B cell (primary cell): ENCODE measurements at regions of chr2 and their contacts with region 1.

Region 1: GRCh38 chr2:201182650-201183364 is at the start of gene CASP10:
- DNase-seq: peak; percentile 85
- ATAC-seq: peak; percentile 84
- H3K4me3 ChIP-seq: peak within 1 kb of the TSS; percentile 64 to 96 (median 79)
- H3K4me3 Mint-ChIP-seq: peak within 1 kb of the TSS; percentile 96
- H3K27ac ChIP-seq: peak within 1 kb of the TSS; percentile 33 to 71
- H3K27ac Mint-ChIP-seq: peak within 1 kb of the TSS; percentile 86
- H3K4me1 ChIP-seq: peaks cover 30 to 37% of the 10 kb centered on the region in 2 donors
- H3K4me1 Mint-ChIP-seq: peaks cover 46% of the 10 kb centered on the region
- H3K27me3 ChIP-seq: no peaks in the 10 kb centered on the region
- H3K27me3 Mint-ChIP-seq: no peaks in the 10 kb centered on the region
- CTCF ChIP-seq: peak; percentile 71
- total RNA-seq, gene CASP10: 33.7 and 34.3 TPM in 2 replicates

Region 2: DNA sequence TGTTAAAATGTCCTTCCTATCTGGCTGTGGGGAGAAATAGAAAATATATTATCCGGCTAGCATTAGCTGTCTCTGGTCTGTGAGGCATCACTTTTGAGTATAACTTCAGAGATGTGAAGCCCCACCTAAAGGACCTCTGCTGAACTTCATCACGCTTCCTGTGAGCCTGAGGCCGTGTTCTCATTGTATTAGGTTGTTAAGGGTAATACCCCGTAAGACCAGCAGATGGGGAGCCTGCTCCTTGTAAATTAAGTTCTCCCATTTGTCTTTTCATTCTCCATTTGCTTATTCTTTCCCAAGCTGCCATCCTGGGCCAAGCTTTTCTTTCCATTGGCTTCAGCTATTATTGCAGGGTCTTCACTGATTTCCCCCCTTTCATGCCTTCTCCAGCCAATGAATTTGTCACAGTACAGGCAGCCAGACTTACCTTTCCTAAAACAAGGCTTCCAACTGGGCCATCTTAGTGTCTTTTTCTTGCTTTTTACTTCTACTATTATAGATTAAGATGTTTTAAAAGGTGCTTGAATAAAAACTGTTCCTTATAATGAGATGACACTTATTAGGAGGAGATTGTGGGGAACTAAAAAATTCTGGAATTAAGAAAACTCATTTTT is 281.2 kb before region 1 on chr2:
- CTCF ChIA-PET with region 1: interaction called, 53 read pairs
- POLR2A ChIA-PET with region 1: interaction called, 5 read pairs
- intact Hi-C with region 1: no loop called
- DNase-seq: peak; percentile 86
- ATAC-seq: peak; percentile 100
- H3K4me3 ChIP-seq: no peak overlapping the region
- H3K4me3 Mint-ChIP-seq: no peak overlapping the region
- H3K27ac ChIP-seq: peak overlapping the region in 1 of 2 donors; percentile 40
- H3K27ac Mint-ChIP-seq: no peak overlapping the region
- H3K4me1 ChIP-seq: no peaks in the 10 kb centered on the region
- H3K4me1 Mint-ChIP-seq: peaks cover 4% of the 10 kb centered on the region
- H3K27me3 ChIP-seq: no peaks in the 10 kb centered on the region
- H3K27me3 Mint-ChIP-seq: no peaks in the 10 kb centered on the region
- CTCF ChIP-seq: peak; percentile 94

Region 3: DNA sequence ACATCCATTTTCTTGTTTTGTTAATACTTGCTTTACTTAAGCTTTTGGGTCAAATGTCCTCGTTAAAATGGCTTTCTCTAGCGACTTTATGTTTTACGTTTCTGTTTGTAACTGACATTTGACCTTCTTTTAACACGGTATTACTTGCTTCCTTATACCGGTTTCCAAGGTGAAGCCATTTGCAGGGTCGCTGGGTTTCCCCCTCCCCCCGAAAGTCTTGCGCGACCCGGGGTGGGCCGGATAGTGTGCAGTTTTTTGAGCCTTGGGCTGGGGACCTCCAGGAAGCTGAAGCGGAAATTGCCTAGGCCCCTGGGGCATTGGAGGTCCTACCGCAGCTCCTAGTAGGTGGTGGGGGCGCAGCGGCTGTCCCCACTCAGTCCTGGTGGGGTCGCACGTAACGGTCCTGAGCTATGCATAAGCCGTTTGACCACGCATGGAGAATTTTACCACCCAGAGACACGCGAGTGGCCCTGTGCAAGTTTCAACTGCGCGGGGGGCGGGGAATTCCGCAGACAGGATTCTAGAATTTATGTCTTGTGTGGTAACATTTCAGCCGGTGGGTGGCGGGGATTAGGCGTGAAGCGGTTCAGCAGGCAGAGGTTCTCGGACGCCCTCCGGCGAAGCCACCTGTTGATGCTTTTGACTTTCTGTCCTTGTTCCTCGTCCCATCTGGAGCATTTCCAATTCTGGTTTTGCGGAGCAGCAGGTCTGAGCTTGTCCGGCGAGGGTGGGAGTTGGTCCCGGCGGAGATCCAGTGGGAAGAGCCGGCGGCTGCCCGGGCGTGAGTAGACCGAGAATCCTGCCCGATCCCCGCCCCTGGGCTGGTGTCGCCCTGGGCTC is 64.5 kb before region 1 on chr2:
- CTCF ChIA-PET with region 1: interaction called, 41 read pairs
- POLR2A ChIA-PET with region 1: interaction called, 12 read pairs
- intact Hi-C with region 1: no loop called
- DNase-seq: peak; percentile 95
- ATAC-seq: peak; percentile 64
- H3K4me3 ChIP-seq: peak overlapping the region; percentile 66 to 100 (median 97)
- H3K4me3 Mint-ChIP-seq: peak overlapping the region; percentile 98
- H3K27ac ChIP-seq: peak overlapping the region; percentile 94 to 96
- H3K27ac Mint-ChIP-seq: peak overlapping the region; percentile 98
- H3K4me1 ChIP-seq: peaks cover 63 to 72% of the 10 kb centered on the region in 2 donors
- H3K4me1 Mint-ChIP-seq: peaks cover 72% of the 10 kb centered on the region
- H3K27me3 ChIP-seq: no peaks in the 10 kb centered on the region
- H3K27me3 Mint-ChIP-seq: no peaks in the 10 kb centered on the region
- CTCF ChIP-seq: peak; percentile 55

Region 4: DNA sequence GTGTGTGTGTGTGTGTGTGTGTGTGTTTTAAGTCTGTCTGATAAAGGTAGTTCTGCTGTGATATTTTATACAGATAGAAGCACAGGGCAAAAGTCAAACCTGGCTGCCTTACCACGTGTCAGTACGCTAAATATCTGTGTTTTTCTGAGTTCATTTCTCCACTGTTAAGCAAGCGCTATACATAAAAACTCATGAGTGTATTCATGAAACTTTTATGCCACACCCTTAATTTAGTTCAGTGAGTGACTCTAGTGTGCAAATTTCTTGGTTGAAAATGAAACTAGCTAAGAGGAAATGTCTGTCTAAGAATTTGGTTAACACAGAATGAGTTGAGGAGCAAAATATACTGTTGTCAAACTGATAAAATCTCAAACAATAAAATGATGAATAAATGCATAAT is 11.3 kb after region 1 on chr2:
- CTCF ChIA-PET with region 1: interaction called, 23 read pairs
- POLR2A ChIA-PET with region 1: interaction called, 6 read pairs
- intact Hi-C with region 1: loop called (anchors 1 kb)
- DNase-seq: peak; percentile 76
- ATAC-seq: peak; percentile 96
- H3K4me3 ChIP-seq: peak overlapping the region in 1 of 5 experiments; percentile 29
- H3K4me3 Mint-ChIP-seq: peak overlapping the region; percentile 80
- H3K27ac ChIP-seq: peak overlapping the region; percentile 31 to 50
- H3K27ac Mint-ChIP-seq: peak overlapping the region; percentile 89
- H3K4me1 ChIP-seq: peaks cover 46 to 55% of the 10 kb centered on the region in 2 donors
- H3K4me1 Mint-ChIP-seq: peaks cover 59% of the 10 kb centered on the region
- H3K27me3 ChIP-seq: no peaks in the 10 kb centered on the region
- H3K27me3 Mint-ChIP-seq: no peaks in the 10 kb centered on the region
- CTCF ChIP-seq: no peak

Region 5: DNA sequence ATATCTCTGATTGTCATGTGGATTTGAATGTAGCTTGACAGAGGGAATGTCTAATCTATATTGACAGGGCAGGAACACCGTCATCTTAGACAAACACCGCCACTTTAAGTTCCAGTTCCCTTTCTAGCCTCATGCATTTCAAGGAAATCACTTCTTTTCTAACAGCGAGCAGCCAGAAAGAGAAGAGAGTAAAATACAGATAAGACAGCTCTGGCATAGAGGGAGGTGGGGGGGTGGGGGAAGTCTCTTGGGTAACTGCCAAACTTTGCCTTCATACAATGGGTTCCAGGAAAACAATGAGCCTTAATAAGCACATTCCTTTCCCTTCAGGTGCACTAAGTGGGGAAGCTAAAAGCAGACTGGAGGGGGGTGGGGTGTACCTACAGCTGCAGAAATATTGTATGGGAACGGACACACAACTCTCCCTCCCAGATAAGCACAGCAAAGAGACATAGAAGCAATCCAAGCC is 37.3 kb after region 1 on chr2:
- CTCF ChIA-PET with region 1: interaction called, 25 read pairs
- POLR2A ChIA-PET with region 1: no interaction called
- intact Hi-C with region 1: no loop called
- DNase-seq: peak; percentile 51
- ATAC-seq: peak; percentile 31
- H3K4me3 ChIP-seq: no peak overlapping the region
- H3K4me3 Mint-ChIP-seq: no peak overlapping the region
- H3K27ac ChIP-seq: peak overlapping the region in 1 of 2 donors; percentile 6
- H3K27ac Mint-ChIP-seq: peak overlapping the region; percentile 12
- H3K4me1 ChIP-seq: peaks cover 12 to 27% of the 10 kb centered on the region in 2 donors
- H3K4me1 Mint-ChIP-seq: peaks cover 38% of the 10 kb centered on the region
- H3K27me3 ChIP-seq: no peaks in the 10 kb centered on the region
- H3K27me3 Mint-ChIP-seq: no peaks in the 10 kb centered on the region
- CTCF ChIP-seq: no peak

Region 6: GRCh38 chr2:201363857-201364560 is 181.2 kb after region 1 on chr2:
- CTCF ChIA-PET with region 1: interaction called, 16 read pairs
- POLR2A ChIA-PET with region 1: no interaction called
- intact Hi-C with region 1: loop called (anchors 1 kb)
- DNase-seq: peak; percentile 69
- ATAC-seq: peak; percentile 97
- H3K4me3 ChIP-seq: no peak overlapping the region
- H3K4me3 Mint-ChIP-seq: no peak overlapping the region
- H3K27ac ChIP-seq: no peak overlapping the region
- H3K27ac Mint-ChIP-seq: no peak overlapping the region
- H3K4me1 ChIP-seq: peaks cover 0 to 3% of the 10 kb centered on the region in 2 donors
- H3K4me1 Mint-ChIP-seq: peaks cover 4% of the 10 kb centered on the region
- H3K27me3 ChIP-seq: no peaks in the 10 kb centered on the region
- H3K27me3 Mint-ChIP-seq: no peaks in the 10 kb centered on the region
- CTCF ChIP-seq: peak; percentile 92